Transverse colon (tissue), 4 donors: ENCODE measurements at regions of chr10 and their contacts with region 1.

Region 1: GRCh38 chr10:111890046-111890445 is 293.5 kb downstream of the GPAM start:
- DNase-seq: no peak
- H3K4me3 ChIP-seq: no peak overlapping the region
- H3K27ac ChIP-seq: no peak overlapping the region
- H3K4me1 ChIP-seq: no peaks in the 10 kb centered on the region
- H3K27me3 ChIP-seq: no peaks in the 10 kb centered on the region
- CTCF ChIP-seq: no peak
- EP300 ChIP-seq: no peak
- POLR2A ChIP-seq: no peak

Region 2: DNA sequence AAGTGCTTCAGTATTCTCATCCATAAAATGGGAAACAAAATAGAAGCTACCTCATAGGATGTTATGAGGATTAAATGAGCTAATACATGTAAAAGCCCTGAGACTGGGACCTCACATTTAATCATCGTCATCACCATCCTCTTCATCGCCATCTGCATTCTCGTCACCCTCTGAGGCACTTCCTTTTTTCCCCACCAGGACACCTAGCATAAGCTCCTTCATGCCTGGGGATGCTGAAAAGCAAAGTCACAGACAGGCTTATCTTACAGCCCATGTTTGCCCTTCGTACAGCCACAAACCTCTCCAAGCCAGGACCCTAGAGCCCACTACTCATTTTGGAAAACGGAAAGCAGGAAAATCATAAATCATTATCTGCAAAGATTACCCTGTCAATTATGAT is 43.9 kb after region 1 on chr10:
- in situ Hi-C with region 1: no loop called
- intact Hi-C with region 1: loop called (anchors 1 kb)
- DNase-seq: no peak
- H3K4me3 ChIP-seq: no peak overlapping the region
- H3K27ac ChIP-seq: no peak overlapping the region
- H3K4me1 ChIP-seq: no peaks in the 10 kb centered on the region
- H3K27me3 ChIP-seq: no peaks in the 10 kb centered on the region
- CTCF ChIP-seq: no peak
- EP300 ChIP-seq: no peak
- POLR2A ChIP-seq: no peak

Region 3: GRCh38 chr10:111944331-111944730 is 54.3 kb after region 1 on chr10:
- in situ Hi-C with region 1: no loop called
- intact Hi-C with region 1: loop called (anchors 2 kb)
- DNase-seq: no peak
- H3K4me3 ChIP-seq: no peak overlapping the region
- H3K27ac ChIP-seq: no peak overlapping the region
- H3K4me1 ChIP-seq: no peaks in the 10 kb centered on the region
- H3K27me3 ChIP-seq: no peaks in the 10 kb centered on the region
- CTCF ChIP-seq: no peak
- EP300 ChIP-seq: no peak
- POLR2A ChIP-seq: no peak

Region 4: DNA sequence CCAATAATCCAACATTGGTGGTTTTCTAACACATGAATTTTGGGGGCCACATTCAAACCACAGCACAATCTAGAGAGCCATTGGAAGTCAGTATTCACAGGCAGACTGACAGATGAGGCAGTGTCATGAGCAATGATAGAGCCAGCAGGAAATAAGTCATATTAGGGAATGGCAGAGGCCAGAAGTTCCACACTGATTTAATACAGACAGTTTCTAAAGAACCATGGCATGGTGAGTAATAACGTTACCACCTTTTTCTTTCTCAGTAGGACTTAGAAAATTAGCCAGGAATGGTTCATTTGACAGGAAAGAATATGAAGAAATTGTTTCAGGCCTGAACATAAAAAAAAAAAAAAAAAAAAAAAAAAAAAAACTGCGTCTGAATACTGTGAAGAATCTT is 83.3 kb after region 1 on chr10:
- in situ Hi-C with region 1: no loop called
- intact Hi-C with region 1: no loop called
- DNase-seq: no peak
- H3K4me3 ChIP-seq: no peak overlapping the region
- H3K27ac ChIP-seq: no peak overlapping the region
- H3K4me1 ChIP-seq: no peaks in the 10 kb centered on the region
- H3K27me3 ChIP-seq: no peaks in the 10 kb centered on the region
- CTCF ChIP-seq: no peak
- EP300 ChIP-seq: no peak
- POLR2A ChIP-seq: no peak

Region 5: GRCh38 chr10:112227331-112227987 is 337.4 kb after region 1 on chr10:
- in situ Hi-C with region 1: no loop called
- intact Hi-C with region 1: no loop called
- DNase-seq: no peak
- H3K4me3 ChIP-seq: no peak overlapping the region
- H3K27ac ChIP-seq: no peak overlapping the region
- H3K4me1 ChIP-seq: peaks cover 0 to 4% (median 0%) of the 10 kb centered on the region in 4 donors
- H3K27me3 ChIP-seq: no peaks in the 10 kb centered on the region
- CTCF ChIP-seq: no peak
- EP300 ChIP-seq: no peak
- POLR2A ChIP-seq: no peak